ENCODE measurements at regions of chr1 and their contacts with region 1.

Region 1: DNA sequence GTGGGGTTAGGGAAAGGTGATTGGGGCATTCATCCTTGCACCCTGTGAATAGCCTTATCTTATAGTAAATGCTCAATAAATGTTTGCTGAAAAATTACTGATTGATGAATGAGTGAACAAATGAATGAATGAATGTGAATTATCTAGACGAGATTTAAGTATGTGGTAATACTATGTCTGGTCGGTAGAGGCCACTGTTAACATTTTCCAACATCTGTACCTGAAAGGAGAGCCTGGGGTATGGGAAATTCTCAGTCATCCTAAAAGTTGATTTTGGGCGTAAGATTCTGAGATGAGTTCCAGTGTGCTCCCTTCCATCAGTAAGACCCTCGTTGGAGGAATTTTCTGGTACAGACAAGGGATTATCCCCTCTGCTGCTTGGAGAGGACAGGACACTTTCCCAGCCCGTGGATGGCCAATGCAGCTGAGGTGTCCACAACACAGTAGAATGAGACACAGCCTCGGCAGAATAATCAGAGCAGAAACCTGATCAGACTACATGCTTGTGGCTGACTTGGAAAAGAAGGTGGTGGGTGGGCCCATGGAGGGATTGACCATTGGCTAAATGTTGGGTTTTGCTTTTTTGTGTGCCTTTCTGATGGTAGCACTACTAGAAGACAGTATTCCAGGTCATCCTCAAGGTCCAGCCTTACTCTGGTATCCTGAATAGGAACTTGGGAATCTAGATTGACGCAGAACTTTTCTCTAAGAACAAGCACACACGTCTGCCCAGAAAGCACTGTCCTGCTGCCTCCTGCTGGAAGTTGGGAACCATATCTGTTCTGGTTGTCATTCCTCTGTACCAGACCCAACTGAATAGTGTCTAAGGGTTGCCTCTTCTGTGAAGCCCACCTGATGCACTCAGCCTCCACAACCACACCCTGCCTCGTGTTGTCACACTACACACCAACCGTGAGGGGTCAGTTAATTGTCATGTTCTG is 262.0 kb downstream of the TNR start:
- DNase-seq: no peak
- ATAC-seq: peak; percentile 49
- H3K4me3 Mint-ChIP-seq: no peak overlapping the region
- H3K27ac Mint-ChIP-seq: no peak overlapping the region
- H3K4me1 Mint-ChIP-seq: no peaks in the 10 kb centered on the region
- H3K27me3 Mint-ChIP-seq: peaks cover 20% of the 10 kb centered on the region
- CTCF ChIP-seq: peak; percentile 64

Region 2: GRCh38 chr1:175449306-175449705 is 32.1 kb before region 1 on chr1:
- CTCF ChIA-PET with region 1: no interaction called
- POLR2A ChIA-PET with region 1: no interaction called
- intact Hi-C with region 1: no loop called
- DNase-seq: no peak
- ATAC-seq: no peak
- H3K4me3 Mint-ChIP-seq: no peak overlapping the region
- H3K27ac Mint-ChIP-seq: no peak overlapping the region
- H3K4me1 Mint-ChIP-seq: no peaks in the 10 kb centered on the region
- H3K27me3 Mint-ChIP-seq: peaks cover 6% of the 10 kb centered on the region
- CTCF ChIP-seq: no peak

Region 3: DNA sequence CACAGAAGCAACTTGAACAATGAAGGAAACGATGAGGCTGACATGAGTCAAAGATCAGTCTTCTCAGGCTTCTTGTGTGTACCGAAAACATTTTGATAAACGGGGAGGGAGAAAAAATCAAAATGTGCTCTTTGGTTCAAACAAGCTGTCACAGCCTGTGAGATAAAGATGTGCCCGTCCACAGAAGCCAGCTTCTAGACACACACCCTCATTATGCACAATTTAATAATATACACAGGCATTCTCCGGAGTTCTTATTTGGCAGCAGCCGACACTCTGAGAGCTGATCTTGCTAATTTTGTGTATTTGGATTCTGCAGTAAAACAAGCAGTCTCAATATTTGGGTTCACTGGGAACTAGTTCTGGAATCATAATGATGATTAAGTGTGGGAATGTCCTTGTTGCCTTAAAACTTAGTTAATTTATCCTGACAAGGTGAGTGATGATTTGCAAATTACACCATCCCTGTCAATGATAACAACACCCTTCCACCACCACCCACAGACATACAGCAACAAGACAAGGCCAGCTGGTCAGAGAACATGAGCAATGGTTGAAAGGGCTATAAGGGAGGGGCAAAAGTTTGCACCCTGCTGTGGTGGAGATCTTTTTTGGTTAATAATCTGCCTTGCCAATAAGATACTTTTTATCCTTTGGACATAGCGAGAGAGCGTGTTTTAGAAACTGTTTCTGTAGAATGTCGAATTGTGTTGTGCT is 18.9 kb before region 1 on chr1:
- CTCF ChIA-PET with region 1: no interaction called
- POLR2A ChIA-PET with region 1: no interaction called
- intact Hi-C with region 1: no loop called
- DNase-seq: no peak
- ATAC-seq: no peak
- H3K4me3 Mint-ChIP-seq: no peak overlapping the region
- H3K27ac Mint-ChIP-seq: no peak overlapping the region
- H3K4me1 Mint-ChIP-seq: no peaks in the 10 kb centered on the region
- H3K27me3 Mint-ChIP-seq: peaks cover 13% of the 10 kb centered on the region
- CTCF ChIP-seq: no peak

Region 4: GRCh38 chr1:175742790-175743459 is 261.5 kb after region 1 on chr1:
- CTCF ChIA-PET with region 1: no interaction called
- POLR2A ChIA-PET with region 1: no interaction called
- intact Hi-C with region 1: loop called (anchors 10 kb)
- DNase-seq: no peak
- ATAC-seq: no peak
- H3K4me3 Mint-ChIP-seq: no peak overlapping the region
- H3K27ac Mint-ChIP-seq: no peak overlapping the region
- H3K4me1 Mint-ChIP-seq: no peaks in the 10 kb centered on the region
- H3K27me3 Mint-ChIP-seq: peaks cover 19% of the 10 kb centered on the region
- CTCF ChIP-seq: no peak

Measured in activated CD8-positive, alpha-beta T cell treated with anti-CD3 and anti-CD28 coated beads for 36 hours (primary cell).